HEK293T (cell line): ENCODE measurements at regions of chr18 and their contacts with region 1.

Region 1: GRCh38 chr18:31722369-31722957 is 38.1 kb upstream of the B4GALT6 start:
- DNase-seq: peak; percentile 95

Region 2: GRCh38 chr18:31555971-31556747 is 166.3 kb before region 1 on chr18:
- CTCF ChIA-PET with region 1: interaction called, 27 read pairs
- POLR2A ChIA-PET with region 1: no interaction called
- DNase-seq: peak; percentile 73

Region 3: DNA sequence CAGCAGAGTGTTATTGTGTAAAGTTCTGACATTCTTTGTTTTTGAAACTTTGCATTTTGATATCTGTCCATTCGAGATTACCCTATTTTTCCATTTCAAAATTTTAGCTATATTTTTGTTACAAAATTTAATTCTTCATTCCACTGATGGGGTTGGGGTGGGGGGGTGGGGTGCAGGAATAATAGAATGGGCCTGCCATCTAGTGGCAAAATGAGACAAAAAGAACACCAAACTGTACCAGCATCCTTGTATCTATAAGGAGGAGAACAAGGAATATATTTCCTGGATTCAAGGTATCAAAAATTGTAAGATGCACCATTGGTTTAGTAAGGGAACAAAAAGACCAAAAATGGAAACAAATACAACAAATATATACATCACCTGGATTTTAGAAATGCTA is 158.7 kb before region 1 on chr18:
- CTCF ChIA-PET with region 1: interaction called, 17 read pairs
- POLR2A ChIA-PET with region 1: no interaction called
- DNase-seq: no peak

Region 4: GRCh38 chr18:31965316-31965970 is 243.0 kb after region 1 on chr18:
- CTCF ChIA-PET with region 1: no interaction called
- POLR2A ChIA-PET with region 1: no interaction called
- DNase-seq: no peak